Heart left ventricle (tissue), 16 donors: ENCODE measurements at regions of chr7 and their contacts with region 1.

Region 1: DNA sequence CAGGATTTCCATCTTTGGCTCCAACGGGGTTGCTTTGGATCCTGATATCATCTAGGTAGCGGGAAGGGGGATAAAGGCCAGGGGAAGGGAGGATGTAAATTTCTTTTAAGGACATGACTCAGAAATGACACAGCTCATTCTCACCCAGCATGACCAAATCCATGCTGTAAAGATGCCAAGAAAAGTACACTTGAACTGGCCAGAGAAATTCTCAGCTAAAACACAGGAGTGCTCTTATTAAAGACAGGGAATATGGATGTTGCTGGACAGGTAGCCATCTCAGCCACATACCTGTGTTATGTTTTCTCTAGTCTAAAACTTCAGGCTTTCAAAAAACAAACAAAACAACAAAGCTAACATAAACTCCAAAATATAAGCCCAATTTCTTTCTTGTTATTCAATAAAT is 68.3 kb downstream of the NAMPT start:
- DNase-seq: peak in 3 of 5 donors; percentile 32 to 79 (median 48)
- ATAC-seq: peak; percentile 68 to 89 (median 86)
- H3K4me3 ChIP-seq: peak overlapping the region in 8 of 12 donors; percentile 6 to 33 (median 28)
- H3K27ac ChIP-seq: peak overlapping the region; percentile 76 to 93 (median 88)
- H3K4me1 ChIP-seq: peaks cover 7 to 38% (median 24%) of the 10 kb centered on the region in 12 donors
- H3K27me3 ChIP-seq: no peaks in the 10 kb centered on the region
- CTCF ChIP-seq: no peak
- POLR2A ChIP-seq: no peak

Region 2: DNA sequence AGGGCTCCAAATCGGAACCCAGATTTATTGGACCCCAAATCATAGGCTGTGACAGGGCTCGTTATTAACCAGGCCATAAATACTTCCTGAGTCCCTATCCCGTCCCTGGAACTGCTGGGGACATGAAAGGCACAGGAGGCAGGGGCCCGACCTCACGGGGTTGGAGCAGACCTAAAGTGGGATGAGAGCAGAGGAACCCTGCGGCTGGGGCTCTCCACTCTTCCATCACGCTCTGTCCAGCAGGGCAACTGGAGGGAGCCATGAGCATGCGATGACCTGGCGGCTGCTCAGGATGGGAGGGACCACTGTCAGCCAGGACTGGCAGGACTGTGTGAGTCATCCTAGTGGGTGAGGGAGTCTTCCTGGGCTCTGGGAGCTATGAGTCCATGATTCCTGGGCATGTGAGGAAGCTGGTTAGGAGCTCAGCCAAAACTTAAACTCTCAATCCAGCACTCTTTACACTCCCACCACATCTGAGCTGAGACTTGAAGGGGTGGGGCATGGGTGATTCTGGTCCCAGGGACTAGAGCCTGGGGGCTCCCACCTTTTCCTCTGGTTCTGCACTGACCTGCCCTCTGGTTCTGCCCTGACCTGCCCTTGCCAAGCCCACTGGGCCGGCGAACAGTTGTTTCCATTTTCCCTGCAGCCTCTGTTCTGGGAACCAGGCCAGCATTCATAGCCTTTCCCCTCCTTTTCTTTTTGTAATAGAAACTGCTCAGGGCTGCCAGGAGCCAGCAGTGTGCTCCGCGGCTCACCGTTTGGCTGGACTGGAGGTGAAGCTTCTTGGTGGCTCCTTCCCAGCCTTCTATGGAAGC is 151.5 kb before region 1 on chr7:
- intact Hi-C with region 1: loop called in 1 of 10 experiments (anchors 5 kb)
- DNase-seq: peak; percentile 84 to 94 (median 89)
- ATAC-seq: peak; percentile 94 to 96 (median 94)
- H3K4me3 ChIP-seq: peak overlapping the region in 10 of 12 donors; percentile 7 to 51 (median 34)
- H3K27ac ChIP-seq: peak overlapping the region; percentile 65 to 96 (median 86)
- H3K4me1 ChIP-seq: peaks cover 0 to 38% (median 32%) of the 10 kb centered on the region in 12 donors
- H3K27me3 ChIP-seq: no peaks in the 10 kb centered on the region
- CTCF ChIP-seq: peak in 1 of 12 donors; percentile 18
- POLR2A ChIP-seq: no peak

Region 3: DNA sequence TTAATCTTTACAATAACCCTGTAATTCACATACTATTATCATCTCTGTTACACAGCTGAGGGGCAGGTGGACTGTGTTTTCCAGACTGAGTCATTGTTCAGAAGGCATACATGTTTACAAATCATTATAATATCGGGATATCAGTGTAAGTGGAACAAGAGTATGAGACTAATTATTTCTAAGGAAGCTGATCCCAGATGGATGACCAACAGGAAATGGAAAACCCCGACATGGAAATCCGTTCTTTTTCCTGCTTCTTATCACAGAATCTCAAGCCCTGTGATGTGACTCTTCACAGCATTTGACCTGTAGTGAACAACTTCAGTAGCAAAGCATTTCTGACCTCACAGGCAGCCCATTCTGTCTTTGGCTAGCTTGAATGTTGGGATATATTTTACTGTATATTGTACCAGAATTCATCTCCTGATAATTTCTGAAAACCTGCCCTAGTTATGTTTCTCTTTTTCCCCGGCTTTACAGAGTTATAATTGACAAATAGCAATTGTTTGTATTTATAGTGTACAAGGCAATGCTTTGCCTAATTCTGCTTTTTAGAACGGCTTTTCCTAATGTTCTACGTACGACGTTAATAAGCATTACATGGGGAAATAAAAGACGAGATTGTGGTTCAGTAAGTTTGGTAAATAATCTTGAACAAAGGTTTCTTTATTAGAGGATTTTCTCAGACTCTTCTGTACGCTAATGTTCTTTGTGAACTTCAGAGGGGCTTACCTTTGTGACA is 25.8 kb before region 1 on chr7:
- intact Hi-C with region 1: no loop called
- DNase-seq: no peak
- ATAC-seq: peak in 1 of 4 donors; percentile 59
- H3K4me3 ChIP-seq: no peak overlapping the region
- H3K27ac ChIP-seq: peak overlapping the region in 1 of 12 donors; percentile 27
- H3K4me1 ChIP-seq: peaks cover 0 to 7% (median 0%) of the 10 kb centered on the region in 12 donors
- H3K27me3 ChIP-seq: no peaks in the 10 kb centered on the region
- CTCF ChIP-seq: no peak
- POLR2A ChIP-seq: no peak

Region 4: DNA sequence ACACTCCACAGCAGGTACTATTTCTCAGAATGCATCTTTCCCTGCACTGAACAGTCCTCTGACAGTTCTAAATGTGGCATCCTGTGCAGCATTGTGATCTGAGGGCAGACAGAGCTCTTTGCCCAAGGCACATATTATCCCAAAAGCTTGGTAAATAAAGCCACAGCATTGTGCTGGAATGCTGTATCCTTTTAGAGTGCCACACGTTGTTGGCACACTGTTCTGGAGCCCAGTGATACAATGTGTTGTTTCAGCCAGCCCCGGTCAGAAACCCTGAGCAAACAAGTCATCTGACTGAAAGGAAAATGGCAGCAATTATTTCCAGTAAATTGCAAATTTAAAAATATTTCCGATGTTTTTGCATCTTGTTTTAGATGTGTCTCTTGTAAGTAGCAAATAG is 22.9 kb after region 1 on chr7:
- intact Hi-C with region 1: loop called in 1 of 10 experiments (anchors 1 kb)
- DNase-seq: peak in 1 of 5 donors; percentile 36
- ATAC-seq: peak in 3 of 4 donors; percentile 38 to 71 (median 62)
- H3K4me3 ChIP-seq: no peak overlapping the region
- H3K27ac ChIP-seq: peak overlapping the region in 8 of 12 donors; percentile 4 to 68 (median 20)
- H3K4me1 ChIP-seq: peaks cover 0 to 11% (median 0%) of the 10 kb centered on the region in 12 donors
- H3K27me3 ChIP-seq: no peaks in the 10 kb centered on the region
- CTCF ChIP-seq: no peak
- POLR2A ChIP-seq: no peak

Region 5: DNA sequence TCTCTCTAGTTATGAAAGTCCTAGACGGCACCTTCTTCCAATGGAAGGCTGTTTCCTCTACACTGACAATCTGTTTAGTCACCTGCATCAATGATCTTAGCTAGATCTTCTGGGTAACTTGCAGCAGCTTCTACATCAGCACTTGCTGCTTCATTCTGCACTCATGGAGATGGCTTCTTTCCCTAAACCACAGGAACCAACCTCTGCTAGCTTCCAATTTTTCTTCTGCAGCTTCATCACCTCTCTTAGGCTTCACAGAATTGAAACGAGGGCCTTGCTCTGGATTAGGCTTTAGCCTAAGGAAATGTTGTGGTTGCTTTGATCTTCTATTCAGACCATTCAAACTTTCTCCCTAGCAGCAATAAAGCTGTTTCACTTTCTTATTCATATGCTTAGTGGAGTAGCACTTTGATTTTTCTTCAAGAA is 43.6 kb after region 1 on chr7:
- intact Hi-C with region 1: loop called in 1 of 10 experiments (anchors 10 kb)
- DNase-seq: no peak
- ATAC-seq: no peak
- H3K4me3 ChIP-seq: no peak overlapping the region
- H3K27ac ChIP-seq: no peak overlapping the region
- H3K4me1 ChIP-seq: peaks cover 0 to 8% (median 0%) of the 10 kb centered on the region in 12 donors
- H3K27me3 ChIP-seq: no peaks in the 10 kb centered on the region
- CTCF ChIP-seq: no peak
- POLR2A ChIP-seq: no peak

Region 6: DNA sequence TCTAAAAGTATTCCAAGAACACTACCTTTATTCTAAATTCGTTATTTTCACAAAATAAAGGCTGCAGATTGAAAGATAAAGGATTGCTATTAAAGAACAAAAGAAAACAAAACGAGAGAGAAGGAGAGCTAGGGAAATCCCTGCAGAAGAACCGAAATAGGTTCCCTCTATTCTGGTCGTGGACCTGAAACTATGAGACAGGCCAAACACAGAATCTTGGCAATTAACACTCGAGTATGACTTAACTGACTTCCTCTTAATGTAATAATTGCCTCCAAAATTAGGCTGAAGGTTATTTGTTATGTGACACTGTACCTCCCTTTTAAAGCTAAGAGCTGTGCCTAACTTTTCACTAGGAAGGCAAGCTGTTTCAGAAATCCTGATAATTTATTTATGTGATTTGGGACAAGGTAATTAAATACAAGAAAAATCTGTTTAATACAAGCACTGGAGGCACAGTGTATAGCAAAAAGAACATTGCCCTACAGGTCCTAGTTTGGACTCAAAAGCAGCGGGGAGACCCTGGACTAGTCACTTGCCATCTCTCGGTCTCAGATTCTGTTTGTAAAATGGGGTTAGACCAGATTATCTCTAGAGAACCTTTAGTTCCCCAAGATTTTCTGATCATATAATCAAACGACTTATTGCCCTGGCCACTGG is 56.6 kb after region 1 on chr7:
- intact Hi-C with region 1: loop called in 3 of 10 experiments (anchors 5 to 10 kb)
- DNase-seq: no peak
- ATAC-seq: peak; percentile 42 to 57 (median 50)
- H3K4me3 ChIP-seq: no peak overlapping the region
- H3K27ac ChIP-seq: peak overlapping the region in 7 of 12 donors; percentile 23 to 51 (median 33)
- H3K4me1 ChIP-seq: peaks cover 0 to 44% (median 15%) of the 10 kb centered on the region in 12 donors
- H3K27me3 ChIP-seq: no peaks in the 10 kb centered on the region
- CTCF ChIP-seq: no peak
- POLR2A ChIP-seq: no peak

Region 7: GRCh38 chr7:106504645-106505044 is 288.1 kb after region 1 on chr7:
- intact Hi-C with region 1: no loop called
- DNase-seq: no peak
- ATAC-seq: no peak
- H3K4me3 ChIP-seq: no peak overlapping the region
- H3K27ac ChIP-seq: no peak overlapping the region
- H3K4me1 ChIP-seq: no peaks in the 10 kb centered on the region
- H3K27me3 ChIP-seq: no peaks in the 10 kb centered on the region
- CTCF ChIP-seq: no peak
- POLR2A ChIP-seq: no peak